Naive thymus-derived CD4-positive, alpha-beta T cell (primary cell): ENCODE measurements at regions of chr12 and their contacts with region 1.

Region 1: DNA sequence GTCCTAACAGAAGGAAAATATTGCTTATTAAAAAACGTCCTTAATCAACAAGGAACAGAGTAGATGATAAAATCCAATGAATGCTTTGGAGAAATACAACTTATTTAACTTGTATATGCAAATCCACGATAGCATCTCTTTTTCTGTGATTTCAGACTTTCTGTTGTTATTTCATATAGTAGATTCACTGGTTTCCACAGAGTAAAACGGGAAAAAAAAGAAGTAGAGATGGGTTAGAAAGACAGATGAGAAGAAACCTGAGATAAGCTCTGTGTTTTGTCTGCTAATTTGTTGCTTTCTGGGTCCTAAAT is 447.7 kb downstream of the RERGL start:
- DNase-seq: no peak
- ATAC-seq: no peak
- H3K4me3 ChIP-seq: no peak overlapping the region
- H3K4me3 Mint-ChIP-seq: peak overlapping the region in 8 of 10 donors; percentile 24 to 79 (median 54)
- H3K27ac ChIP-seq: no peak overlapping the region
- H3K27ac Mint-ChIP-seq: no peak overlapping the region
- H3K4me1 ChIP-seq: no peaks in the 10 kb centered on the region
- H3K4me1 Mint-ChIP-seq: peaks cover 0 to 8% (median 4%) of the 10 kb centered on the region in 7 donors
- H3K27me3 ChIP-seq: no peaks in the 10 kb centered on the region
- H3K27me3 Mint-ChIP-seq: no peaks in the 10 kb centered on the region

Region 2: DNA sequence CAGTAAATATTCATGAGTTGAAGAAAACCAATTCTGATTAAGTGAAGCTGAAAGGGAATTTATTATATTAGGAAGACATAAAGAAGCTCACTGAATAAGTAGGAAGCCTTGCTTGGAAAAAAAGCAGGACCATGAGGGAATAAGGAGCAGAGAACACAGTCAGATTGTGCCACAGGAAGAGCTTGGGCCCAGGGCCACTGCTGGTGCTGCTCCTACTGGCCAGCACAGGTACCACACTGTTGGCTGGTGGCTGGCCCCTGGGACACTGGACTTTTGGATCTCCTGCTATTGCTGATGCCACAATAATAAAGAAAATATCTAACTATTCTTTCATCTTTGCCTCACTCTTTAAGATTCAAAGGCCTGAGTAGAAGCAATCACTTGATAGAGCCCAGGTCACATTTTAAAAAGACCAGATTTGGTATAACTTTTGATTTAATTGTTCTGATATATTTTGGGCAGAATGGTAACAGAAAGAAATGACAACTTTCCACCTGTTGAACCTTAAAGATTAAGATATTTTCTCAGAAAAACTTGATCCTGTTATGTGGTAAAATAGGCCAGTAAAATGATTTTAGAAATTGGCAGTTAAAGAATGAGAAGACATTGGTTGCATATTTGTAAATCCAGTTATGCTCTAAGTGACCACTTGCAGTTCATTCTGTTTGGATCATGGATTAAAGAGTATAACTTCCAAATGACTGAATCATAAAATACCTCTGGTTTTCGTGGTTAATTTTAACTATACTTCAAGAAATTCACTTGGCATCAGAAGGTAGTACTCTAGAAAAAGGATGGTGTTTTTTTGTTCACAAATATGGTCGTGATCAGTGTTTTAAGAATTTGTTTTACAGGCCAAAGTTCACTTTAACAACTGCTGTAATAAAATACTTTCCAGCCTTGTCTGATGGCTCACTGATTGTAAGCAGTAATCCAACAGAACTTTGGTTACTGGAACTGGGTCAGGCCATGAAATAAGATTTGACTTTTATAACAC is 1662.9 kb before region 1 on chr12:
- CTCF ChIA-PET with region 1: no interaction called
- POLR2A ChIA-PET with region 1: no interaction called
- intact Hi-C with region 1: loop called (anchors 5 kb)
- DNase-seq: no peak
- ATAC-seq: no peak
- H3K4me3 ChIP-seq: no peak overlapping the region
- H3K4me3 Mint-ChIP-seq: no peak overlapping the region
- H3K27ac ChIP-seq: no peak overlapping the region
- H3K27ac Mint-ChIP-seq: no peak overlapping the region
- H3K4me1 ChIP-seq: no peaks in the 10 kb centered on the region
- H3K4me1 Mint-ChIP-seq: no peaks in the 10 kb centered on the region
- H3K27me3 ChIP-seq: no peaks in the 10 kb centered on the region
- H3K27me3 Mint-ChIP-seq: no peaks in the 10 kb centered on the region

Region 3: DNA sequence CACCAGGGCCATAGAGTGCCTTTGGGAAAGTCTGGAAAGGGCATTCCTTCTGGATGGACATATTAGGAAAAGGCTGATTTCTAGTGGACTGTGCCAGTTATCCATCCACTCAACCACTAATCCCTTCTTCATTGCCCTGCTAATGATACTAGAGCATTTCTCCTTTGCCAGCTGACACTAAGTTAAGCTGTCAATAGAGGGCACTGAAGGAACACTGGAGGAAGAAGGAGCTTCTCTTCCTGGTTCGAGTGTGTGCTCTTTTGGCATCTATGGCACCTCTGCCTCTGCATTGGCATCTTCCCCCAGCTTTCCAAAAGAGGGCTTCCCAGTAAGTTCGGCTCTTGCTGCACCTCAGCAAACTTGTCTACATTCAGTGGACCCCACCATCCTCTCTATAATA is 1565.7 kb before region 1 on chr12:
- CTCF ChIA-PET with region 1: no interaction called
- POLR2A ChIA-PET with region 1: no interaction called
- intact Hi-C with region 1: loop called in 1 of 2 experiments (anchors 5 kb)
- DNase-seq: no peak
- ATAC-seq: peak; percentile 36
- H3K4me3 ChIP-seq: no peak overlapping the region
- H3K4me3 Mint-ChIP-seq: no peak overlapping the region
- H3K27ac ChIP-seq: no peak overlapping the region
- H3K27ac Mint-ChIP-seq: no peak overlapping the region
- H3K4me1 ChIP-seq: no peaks in the 10 kb centered on the region
- H3K4me1 Mint-ChIP-seq: no peaks in the 10 kb centered on the region
- H3K27me3 ChIP-seq: no peaks in the 10 kb centered on the region
- H3K27me3 Mint-ChIP-seq: peaks cover 0 to 10% (median 7%) of the 10 kb centered on the region in 5 donors

Region 4: GRCh38 chr12:17609153-17609552 is 33.1 kb before region 1 on chr12:
- CTCF ChIA-PET with region 1: no interaction called
- POLR2A ChIA-PET with region 1: no interaction called
- intact Hi-C with region 1: no loop called
- DNase-seq: no peak
- ATAC-seq: no peak
- H3K4me3 ChIP-seq: no peak overlapping the region
- H3K4me3 Mint-ChIP-seq: no peak overlapping the region
- H3K27ac ChIP-seq: no peak overlapping the region
- H3K27ac Mint-ChIP-seq: peak overlapping the region in 1 of 9 donors; percentile 81
- H3K4me1 ChIP-seq: no peaks in the 10 kb centered on the region
- H3K4me1 Mint-ChIP-seq: no peaks in the 10 kb centered on the region
- H3K27me3 ChIP-seq: no peaks in the 10 kb centered on the region
- H3K27me3 Mint-ChIP-seq: no peaks in the 10 kb centered on the region

Region 5: GRCh38 chr12:17866802-17867201 is 224.5 kb after region 1 on chr12:
- CTCF ChIA-PET with region 1: no interaction called
- POLR2A ChIA-PET with region 1: no interaction called
- intact Hi-C with region 1: no loop called
- DNase-seq: no peak
- ATAC-seq: no peak
- H3K4me3 ChIP-seq: no peak overlapping the region
- H3K4me3 Mint-ChIP-seq: no peak overlapping the region
- H3K27ac ChIP-seq: no peak overlapping the region
- H3K27ac Mint-ChIP-seq: no peak overlapping the region
- H3K4me1 ChIP-seq: no peaks in the 10 kb centered on the region
- H3K4me1 Mint-ChIP-seq: no peaks in the 10 kb centered on the region
- H3K27me3 ChIP-seq: no peaks in the 10 kb centered on the region
- H3K27me3 Mint-ChIP-seq: no peaks in the 10 kb centered on the region

Region 6: DNA sequence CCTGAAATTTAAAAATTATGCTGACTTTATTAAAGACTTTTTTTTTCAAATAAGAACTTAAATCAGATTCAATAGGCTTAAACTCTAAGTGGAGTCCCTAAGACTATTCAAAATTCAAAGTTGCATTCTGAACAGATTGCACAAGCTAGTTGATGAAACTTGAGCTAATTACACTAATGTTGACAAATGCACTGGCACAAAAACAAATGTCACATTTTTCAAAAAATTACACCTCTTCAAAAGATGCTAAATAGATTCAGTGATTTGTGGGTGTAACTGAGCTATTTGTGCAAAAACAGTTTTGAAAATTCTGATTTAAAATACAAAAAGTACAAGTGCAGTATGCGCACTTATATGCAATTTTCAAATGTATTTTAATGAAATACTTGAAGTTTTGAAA is 242.3 kb after region 1 on chr12:
- CTCF ChIA-PET with region 1: no interaction called
- POLR2A ChIA-PET with region 1: no interaction called
- intact Hi-C with region 1: no loop called
- DNase-seq: no peak
- ATAC-seq: no peak
- H3K4me3 ChIP-seq: no peak overlapping the region
- H3K4me3 Mint-ChIP-seq: no peak overlapping the region
- H3K27ac ChIP-seq: no peak overlapping the region
- H3K27ac Mint-ChIP-seq: no peak overlapping the region
- H3K4me1 ChIP-seq: no peaks in the 10 kb centered on the region
- H3K4me1 Mint-ChIP-seq: no peaks in the 10 kb centered on the region
- H3K27me3 ChIP-seq: no peaks in the 10 kb centered on the region
- H3K27me3 Mint-ChIP-seq: no peaks in the 10 kb centered on the region